ENCODE measurements at regions of chr1 and their contacts with region 1.

Region 1: DNA sequence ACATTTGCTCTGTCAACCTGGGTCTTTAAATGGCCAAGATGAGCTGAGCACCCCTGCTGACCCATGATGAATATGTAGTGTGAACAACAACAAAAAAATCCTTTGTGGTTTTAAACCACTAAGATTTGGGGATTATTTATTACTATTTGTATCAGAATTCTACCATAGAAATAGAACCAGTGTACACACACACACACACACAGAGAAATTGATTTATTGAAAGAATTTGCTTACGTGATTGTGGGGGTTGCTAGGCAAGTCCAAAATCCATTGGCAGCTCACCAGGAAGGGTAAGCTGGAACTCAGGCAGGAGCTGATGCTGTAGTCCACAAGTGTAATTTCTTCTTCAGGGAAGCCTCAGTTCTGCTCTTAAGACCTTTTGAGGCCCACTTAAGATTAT is 82.5 kb upstream of the MAP1LC3C start:
- H3K4me3 ChIP-seq: no peak overlapping the region
- H3K27ac ChIP-seq: no peak overlapping the region
- H3K4me1 ChIP-seq: no peaks in the 10 kb centered on the region
- CTCF ChIP-seq: no peak

Region 2: GRCh38 chr1:242033447-242033846 is 48.0 kb before region 1 on chr1:
- CTCF ChIA-PET with region 1: no interaction called
- POLR2A ChIA-PET with region 1: interaction called, 11 read pairs
- H3K4me3 ChIP-seq: no peak overlapping the region
- H3K27ac ChIP-seq: no peak overlapping the region
- H3K4me1 ChIP-seq: no peaks in the 10 kb centered on the region
- CTCF ChIP-seq: no peak

Region 3: GRCh38 chr1:242093116-242093515 is 11.7 kb after region 1 on chr1:
- CTCF ChIA-PET with region 1: no interaction called
- POLR2A ChIA-PET with region 1: no interaction called
- H3K4me3 ChIP-seq: no peak overlapping the region
- H3K27ac ChIP-seq: no peak overlapping the region
- H3K4me1 ChIP-seq: no peaks in the 10 kb centered on the region
- CTCF ChIP-seq: no peak

Region 4: DNA sequence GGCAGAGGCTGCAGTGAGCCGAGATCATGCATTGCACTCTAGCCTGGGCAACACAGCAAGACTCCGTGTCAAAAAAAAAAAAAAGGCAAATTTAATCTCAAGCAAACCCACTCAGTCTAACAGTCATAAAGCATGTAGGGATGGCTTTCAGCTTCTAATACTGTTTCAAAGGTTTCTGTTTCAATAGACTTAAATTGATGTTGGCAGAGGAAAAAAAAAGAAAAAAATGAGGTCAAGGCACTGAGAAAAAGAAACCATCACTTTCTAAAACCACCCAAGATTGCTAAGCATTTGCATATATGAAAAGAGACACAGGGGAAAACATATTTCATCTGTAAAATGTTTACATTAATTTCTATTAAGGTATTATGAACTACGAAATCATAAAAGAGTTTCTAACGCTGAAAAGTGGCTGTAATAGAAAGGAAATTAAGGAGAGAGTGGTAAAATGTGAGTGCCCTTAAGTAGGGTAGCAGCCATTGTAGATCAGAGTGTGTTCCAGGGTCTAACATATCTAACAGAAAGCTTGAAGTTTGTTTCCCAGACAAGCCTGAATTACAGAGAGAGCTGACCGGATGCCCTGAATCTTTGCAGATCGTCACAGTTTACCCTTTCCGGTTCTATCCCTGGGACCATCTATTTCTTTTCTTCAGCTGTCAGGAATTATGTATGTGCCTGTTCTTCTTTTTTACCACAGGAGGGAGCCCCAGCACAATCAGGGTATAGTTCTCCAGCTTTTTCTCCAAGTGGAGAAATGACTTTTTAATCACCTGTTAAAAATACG is 373.0 kb after region 1 on chr1:
- CTCF ChIA-PET with region 1: no interaction called
- POLR2A ChIA-PET with region 1: no interaction called
- H3K4me3 ChIP-seq: no peak overlapping the region
- H3K27ac ChIP-seq: no peak overlapping the region
- H3K4me1 ChIP-seq: no peaks in the 10 kb centered on the region
- CTCF ChIP-seq: peak; percentile 37

Measured in HEK293 (cell line).